Endothelial cell of umbilical vein (primary cell): ENCODE measurements at regions of chr17 and their contacts with region 1.

Region 1: DNA sequence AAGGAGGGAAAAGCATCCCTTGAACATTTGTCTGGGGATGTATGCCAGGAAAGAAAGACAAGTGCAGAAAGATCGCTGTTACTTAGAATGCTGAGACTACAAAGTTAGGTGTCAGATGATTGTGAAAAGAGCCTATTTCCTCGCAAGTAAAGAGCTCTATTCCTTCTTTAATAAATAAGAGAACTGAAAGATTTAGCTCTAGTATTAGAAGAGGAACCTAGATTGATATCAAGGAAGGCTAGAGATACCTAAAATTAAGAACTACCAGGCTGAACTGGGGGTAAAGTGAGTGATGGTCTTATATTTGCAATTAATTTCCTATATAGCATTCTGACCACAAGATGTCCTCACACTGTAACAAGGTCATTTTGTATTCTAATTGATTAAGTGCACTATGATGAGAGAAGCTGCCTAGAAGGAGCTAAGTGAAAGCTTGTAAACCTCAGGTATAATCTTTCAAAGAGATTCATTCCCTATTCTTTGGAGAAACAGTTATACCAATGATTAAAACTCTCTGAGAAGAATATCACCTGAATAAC is 62.3 kb downstream of the SSH2 start:
- DNase-seq: peak; percentile 40
- H3K4me3 ChIP-seq: no peak overlapping the region
- H3K27ac ChIP-seq: no peak overlapping the region
- H3K4me1 ChIP-seq: no peaks in the 10 kb centered on the region
- H3K27me3 ChIP-seq: no peaks in the 10 kb centered on the region
- CTCF ChIP-seq: no peak
- POLR2A ChIP-seq: no peak

Region 2: GRCh38 chr17:29807520-29808351 is 60.0 kb before region 1 on chr17:
- CTCF ChIA-PET with region 1: interaction called, 10 read pairs
- POLR2A ChIA-PET with region 1: no interaction called
- dilution Hi-C with region 1: no loop called
- intact Hi-C with region 1: no loop called
- DNase-seq: peak; percentile 67
- H3K4me3 ChIP-seq: no peak overlapping the region
- H3K27ac ChIP-seq: no peak overlapping the region
- H3K4me1 ChIP-seq: no peaks in the 10 kb centered on the region
- H3K27me3 ChIP-seq: no peaks in the 10 kb centered on the region
- CTCF ChIP-seq: peak; percentile 61 to 64
- POLR2A ChIP-seq: no peak

Region 3: DNA sequence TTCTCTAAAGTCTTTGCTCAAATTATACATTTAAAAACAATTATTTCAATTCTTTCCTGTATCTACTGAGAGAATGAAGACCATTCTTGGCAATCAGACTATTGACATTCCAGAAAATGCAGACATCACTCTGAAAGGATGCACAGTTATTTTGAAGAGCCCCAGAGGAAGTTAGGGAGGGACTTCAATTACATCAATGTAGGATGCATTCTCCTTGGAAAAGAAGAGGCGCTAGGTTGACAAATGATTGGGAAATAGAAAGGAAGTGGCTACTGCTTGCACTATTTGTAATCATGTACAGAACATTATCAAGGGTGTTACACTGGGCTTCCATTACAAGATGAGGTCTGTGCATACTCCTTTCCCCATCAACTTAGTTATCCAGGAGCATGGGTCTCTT is 12.0 kb before region 1 on chr17:
- CTCF ChIA-PET with region 1: interaction called, 13 read pairs
- POLR2A ChIA-PET with region 1: no interaction called
- dilution Hi-C with region 1: no loop called
- intact Hi-C with region 1: no loop called
- DNase-seq: no peak
- H3K4me3 ChIP-seq: no peak overlapping the region
- H3K27ac ChIP-seq: no peak overlapping the region
- H3K4me1 ChIP-seq: no peaks in the 10 kb centered on the region
- H3K27me3 ChIP-seq: no peaks in the 10 kb centered on the region
- CTCF ChIP-seq: no peak
- POLR2A ChIP-seq: no peak

Region 4: GRCh38 chr17:29880031-29880430 is 12.3 kb after region 1 on chr17:
- CTCF ChIA-PET with region 1: interaction called, 16 read pairs
- POLR2A ChIA-PET with region 1: no interaction called
- dilution Hi-C with region 1: no loop called
- intact Hi-C with region 1: no loop called
- DNase-seq: no peak
- H3K4me3 ChIP-seq: no peak overlapping the region
- H3K27ac ChIP-seq: no peak overlapping the region
- H3K4me1 ChIP-seq: peaks cover 11% of the 10 kb centered on the region
- H3K27me3 ChIP-seq: no peaks in the 10 kb centered on the region
- CTCF ChIP-seq: no peak
- POLR2A ChIP-seq: no peak

Region 5: DNA sequence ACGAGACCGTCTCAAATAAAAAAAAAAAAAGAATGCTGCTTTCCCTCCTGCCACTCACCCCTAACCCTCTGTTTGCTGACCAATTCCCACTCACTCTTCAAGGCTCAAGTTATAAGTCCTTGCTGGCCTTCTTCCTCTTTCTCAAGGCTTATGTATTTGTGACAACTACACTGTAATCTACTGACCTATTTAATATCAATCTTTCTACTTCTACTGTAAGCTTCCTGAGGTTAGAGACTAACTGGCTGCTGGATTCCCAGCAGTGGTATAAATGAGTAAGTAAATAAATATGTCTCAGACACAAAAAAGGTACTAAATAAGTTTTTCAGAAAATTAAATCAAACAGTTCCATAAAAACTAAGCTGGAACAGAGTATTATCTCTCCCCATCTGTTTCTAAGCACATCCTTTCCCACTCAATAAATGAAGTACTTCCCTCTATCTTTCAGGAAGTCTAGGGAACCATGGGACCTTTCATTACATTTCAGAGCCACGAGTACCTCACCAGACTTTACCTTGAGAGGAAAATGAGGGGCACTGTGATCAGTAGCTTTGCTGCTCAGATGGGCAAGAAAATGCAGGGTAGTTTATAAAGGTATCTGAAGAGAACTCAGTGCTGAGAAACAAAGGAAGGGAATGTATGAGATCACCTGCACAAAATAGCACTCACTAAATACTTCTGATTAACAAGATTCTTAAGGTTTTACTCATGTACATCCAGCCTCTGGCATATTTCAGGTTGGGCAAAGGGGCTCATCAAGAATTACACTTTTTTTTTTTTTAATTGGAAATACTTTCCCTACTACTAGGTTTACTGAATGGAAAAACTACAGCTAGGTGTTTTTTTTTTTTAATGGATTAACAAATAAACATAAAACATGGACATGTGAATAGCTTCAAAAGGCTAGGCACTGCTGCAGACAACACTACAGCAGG is 51.5 kb after region 1 on chr17:
- CTCF ChIA-PET with region 1: interaction called, 10 read pairs
- POLR2A ChIA-PET with region 1: no interaction called
- dilution Hi-C with region 1: no loop called
- intact Hi-C with region 1: no loop called
- DNase-seq: peak; percentile 69
- H3K4me3 ChIP-seq: no peak overlapping the region
- H3K27ac ChIP-seq: peak overlapping the region; percentile 70
- H3K4me1 ChIP-seq: peaks cover 7% of the 10 kb centered on the region
- H3K27me3 ChIP-seq: no peaks in the 10 kb centered on the region
- CTCF ChIP-seq: no peak
- POLR2A ChIP-seq: no peak

Region 6: DNA sequence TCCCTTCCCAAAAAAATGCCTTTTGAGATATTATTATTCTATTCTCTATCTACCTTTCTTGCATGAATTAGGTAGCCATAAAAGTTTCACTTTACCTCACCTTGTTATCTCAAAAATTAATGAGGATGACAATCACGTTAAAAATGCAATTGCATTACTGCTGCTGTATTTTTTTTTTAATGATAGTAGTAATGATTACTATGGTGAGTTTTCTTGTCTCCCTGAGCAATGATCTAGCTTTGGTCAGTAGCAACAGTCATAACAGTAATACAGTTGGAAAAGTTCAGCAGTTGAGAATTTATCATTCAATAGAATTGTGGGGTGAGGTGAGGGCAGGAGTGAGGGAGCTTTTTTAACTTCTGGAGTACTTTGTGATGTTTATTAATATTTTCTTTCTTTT is 73.6 kb after region 1 on chr17 and contains the start of gene EFCAB5:
- CTCF ChIA-PET with region 1: interaction called, 10 read pairs
- POLR2A ChIA-PET with region 1: no interaction called
- dilution Hi-C with region 1: no loop called
- intact Hi-C with region 1: no loop called
- DNase-seq: no peak
- H3K4me3 ChIP-seq: no peak within 1 kb of the TSS
- H3K27ac ChIP-seq: no peak within 1 kb of the TSS
- H3K4me1 ChIP-seq: peaks cover 8% of the 10 kb centered on the region
- H3K27me3 ChIP-seq: no peaks in the 10 kb centered on the region
- CTCF ChIP-seq: no peak
- POLR2A ChIP-seq: no peak
- total RNA-seq, gene EFCAB5: 0.40 and 0.44 TPM in 2 replicates

Region 7: GRCh38 chr17:30021708-30022317 is 154.1 kb after region 1 on chr17:
- CTCF ChIA-PET with region 1: interaction called, 16 read pairs
- POLR2A ChIA-PET with region 1: no interaction called
- dilution Hi-C with region 1: no loop called
- intact Hi-C with region 1: no loop called
- DNase-seq: peak; percentile 71
- H3K4me3 ChIP-seq: no peak overlapping the region
- H3K27ac ChIP-seq: no peak overlapping the region
- H3K4me1 ChIP-seq: peaks cover 2% of the 10 kb centered on the region
- H3K27me3 ChIP-seq: no peaks in the 10 kb centered on the region
- CTCF ChIP-seq: peak; percentile 58 to 59
- POLR2A ChIP-seq: no peak

Region 8: GRCh38 chr17:30062372-30062771 is 194.7 kb after region 1 on chr17:
- CTCF ChIA-PET with region 1: no interaction called
- POLR2A ChIA-PET with region 1: no interaction called
- dilution Hi-C with region 1: no loop called
- intact Hi-C with region 1: no loop called
- DNase-seq: no peak
- H3K4me3 ChIP-seq: no peak overlapping the region
- H3K27ac ChIP-seq: no peak overlapping the region
- H3K4me1 ChIP-seq: no peaks in the 10 kb centered on the region
- H3K27me3 ChIP-seq: peaks cover 6 to 27% of the 10 kb centered on the region in 2 experiments
- CTCF ChIP-seq: no peak
- POLR2A ChIP-seq: no peak